Ovary (tissue), 10 donors: ENCODE measurements at regions of chr5 and their contacts with region 1.

Region 1: DNA sequence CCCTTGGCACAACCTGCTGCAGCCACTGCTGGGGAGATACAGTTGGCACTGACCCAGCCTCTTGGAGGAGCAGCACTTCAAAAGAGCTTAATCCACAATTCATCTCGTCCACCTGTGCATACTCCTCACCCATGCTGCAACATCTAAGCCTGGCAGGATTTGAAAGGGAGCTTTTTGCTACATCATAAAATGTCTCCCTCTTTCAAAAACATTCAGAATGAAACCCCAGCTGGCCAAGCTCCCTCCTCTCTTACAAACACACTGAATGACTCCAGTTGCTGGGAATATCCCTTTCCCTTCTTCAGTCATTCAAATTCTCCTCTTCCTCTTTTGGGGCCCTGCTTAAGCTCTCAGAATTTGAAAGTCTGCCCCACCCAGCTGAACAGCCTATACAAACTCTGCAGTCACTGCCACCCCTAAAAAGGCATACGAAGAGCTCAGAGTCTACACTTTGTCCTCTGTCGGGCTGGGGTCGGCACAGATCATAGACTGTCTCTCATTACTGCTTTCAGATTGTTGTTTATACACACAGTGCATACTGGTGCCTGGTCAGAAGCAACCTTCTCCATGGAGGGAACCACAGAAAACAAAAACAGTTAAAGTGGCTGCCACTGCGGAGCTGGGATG is 8.8 kb upstream of the C5orf15 start:
- DNase-seq: no peak
- H3K4me3 ChIP-seq: no peak overlapping the region
- H3K27ac ChIP-seq: no peak overlapping the region
- H3K4me1 ChIP-seq: no peaks in the 10 kb centered on the region
- H3K27me3 ChIP-seq: no peaks in the 10 kb centered on the region
- CTCF ChIP-seq: no peak
- EP300 ChIP-seq: no peak
- POLR2A ChIP-seq: no peak

Region 2: DNA sequence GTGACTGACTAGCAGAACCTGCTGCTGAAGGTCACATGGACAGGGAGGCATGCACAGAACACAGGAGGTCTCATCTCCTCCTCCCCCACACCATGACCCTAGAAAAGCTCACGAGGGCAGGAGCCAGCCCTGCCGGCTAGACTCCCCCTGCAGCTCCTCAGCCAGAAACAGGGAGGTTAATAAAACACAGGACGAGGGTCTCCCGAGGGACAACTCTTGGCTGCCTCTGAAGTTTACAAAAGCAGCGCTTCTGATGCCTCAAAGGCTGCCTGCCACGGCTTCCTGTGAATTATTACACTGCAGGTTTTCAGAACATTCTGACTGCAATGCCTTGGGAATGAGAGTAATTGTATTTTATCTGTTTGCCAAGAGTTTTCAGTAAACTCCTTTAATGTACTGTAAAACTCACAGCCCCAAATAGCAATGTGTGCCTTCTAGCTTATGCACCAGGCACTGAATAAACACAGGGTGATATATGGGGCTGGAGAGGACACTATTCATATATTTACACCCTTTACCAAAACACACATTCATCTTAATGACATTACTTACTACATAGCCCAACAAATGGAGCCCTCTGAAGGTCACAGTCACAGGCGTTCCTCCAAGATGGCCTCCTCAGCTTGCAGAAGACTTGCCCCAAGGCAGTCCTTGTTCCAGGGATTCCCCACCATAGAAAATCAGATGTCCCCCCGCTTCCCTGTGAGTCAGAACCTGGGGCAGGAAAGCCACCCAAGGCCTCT is 92.5 kb before region 1 on chr5:
- intact Hi-C with region 1: loop called in 1 of 4 experiments (anchors 10 kb)
- DNase-seq: peak in 2 of 5 donors; percentile 19 to 55
- H3K4me3 ChIP-seq: no peak overlapping the region
- H3K27ac ChIP-seq: no peak overlapping the region
- H3K4me1 ChIP-seq: peaks cover 3% of the 10 kb centered on the region
- H3K27me3 ChIP-seq: no peaks in the 10 kb centered on the region
- CTCF ChIP-seq: no peak
- EP300 ChIP-seq: no peak
- POLR2A ChIP-seq: no peak